Panc1 (cell line): ENCODE measurements at regions of chr7 and their contacts with region 1.

Region 1: GRCh38 chr7:135274495-135275268 is 41.0 kb downstream of the STRA8 start:
- DNase-seq: peak; percentile 69
- ATAC-seq: peak; percentile 91
- H3K4me3 ChIP-seq: no peak overlapping the region
- H3K27ac ChIP-seq: no peak overlapping the region
- H3K4me1 ChIP-seq: no peaks in the 10 kb centered on the region
- H3K27me3 ChIP-seq: no peaks in the 10 kb centered on the region
- CTCF ChIP-seq: peak; percentile 89

Region 2: DNA sequence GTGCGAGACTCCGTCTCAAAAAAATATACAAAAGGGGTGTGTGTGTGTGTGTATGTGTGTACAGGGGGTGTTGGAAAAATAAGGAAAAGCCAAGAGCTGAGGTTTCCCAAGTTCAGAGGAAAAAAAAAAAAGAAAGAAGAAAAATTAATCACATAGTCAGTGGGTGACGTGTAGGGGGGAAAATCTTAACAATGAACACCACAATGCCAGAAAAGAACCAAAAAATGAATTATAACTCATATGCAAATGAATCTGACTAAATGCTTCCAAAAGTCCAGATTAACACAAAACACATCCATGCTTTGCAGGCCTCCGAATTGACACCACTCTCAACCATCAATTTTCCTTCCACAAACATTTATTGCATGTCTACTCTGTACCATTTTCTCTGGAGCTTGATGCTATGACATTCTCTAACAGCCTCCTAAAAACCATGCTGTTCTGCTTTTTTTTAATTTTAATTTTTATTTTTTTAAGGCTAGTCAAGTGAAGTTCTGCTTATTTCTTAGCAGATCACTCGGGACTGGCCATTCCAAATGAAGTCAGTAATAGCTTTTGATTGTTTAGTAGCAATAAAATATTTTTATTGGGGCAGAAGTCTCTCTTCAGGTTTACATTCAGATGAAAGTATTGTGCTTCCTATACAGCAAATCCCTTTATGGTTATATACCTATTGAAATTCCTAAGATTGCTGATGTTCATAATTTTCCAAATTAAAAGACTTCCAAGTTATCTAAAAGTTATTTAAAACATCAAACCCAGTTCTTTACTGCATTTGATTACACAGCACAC is 101.4 kb after region 1 on chr7:
- CTCF ChIA-PET with region 1: no interaction called
- POLR2A ChIA-PET with region 1: no interaction called
- in situ Hi-C with region 1: no loop called
- intact Hi-C with region 1: no loop called
- DNase-seq: no peak
- ATAC-seq: no peak
- H3K4me3 ChIP-seq: no peak overlapping the region
- H3K27ac ChIP-seq: no peak overlapping the region
- H3K4me1 ChIP-seq: no peaks in the 10 kb centered on the region
- H3K27me3 ChIP-seq: no peaks in the 10 kb centered on the region
- CTCF ChIP-seq: no peak

Region 3: DNA sequence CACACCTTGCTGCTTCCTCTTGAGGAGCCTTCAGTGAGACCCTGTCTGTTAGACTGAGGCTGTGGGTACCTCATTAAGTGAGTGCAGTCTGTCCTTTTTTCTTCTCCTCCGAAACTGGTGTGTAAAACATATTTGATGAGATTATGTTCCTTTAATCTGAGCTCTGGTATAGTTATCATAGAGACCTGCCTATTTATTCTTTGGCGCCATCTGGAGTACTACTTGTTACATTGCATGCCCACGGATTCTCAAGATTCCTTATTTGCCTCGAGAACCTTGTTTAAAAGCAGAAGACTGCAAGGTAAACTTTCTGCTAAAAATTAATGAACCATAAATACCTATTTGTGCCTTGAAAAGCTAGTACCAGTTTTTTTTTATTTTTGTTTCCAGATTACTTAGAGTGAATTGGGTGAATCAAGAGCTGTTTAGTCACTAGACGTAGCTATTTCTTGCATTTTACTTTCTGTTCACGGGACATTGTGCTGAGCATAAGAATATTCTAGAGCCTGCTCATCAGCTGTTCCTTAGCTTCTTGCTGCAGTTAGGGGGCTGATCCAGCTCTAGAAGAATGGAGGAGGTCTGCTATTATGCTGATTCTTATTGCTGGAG is 370.7 kb after region 1 on chr7:
- CTCF ChIA-PET with region 1: interaction called, 10 read pairs
- POLR2A ChIA-PET with region 1: no interaction called
- in situ Hi-C with region 1: no loop called
- intact Hi-C with region 1: no loop called
- DNase-seq: no peak
- ATAC-seq: peak; percentile 86
- H3K4me3 ChIP-seq: no peak overlapping the region
- H3K27ac ChIP-seq: no peak overlapping the region
- H3K4me1 ChIP-seq: no peaks in the 10 kb centered on the region
- H3K27me3 ChIP-seq: no peaks in the 10 kb centered on the region
- CTCF ChIP-seq: peak; percentile 79

Region 4: GRCh38 chr7:135712159-135712782 is 437.6 kb after region 1 on chr7:
- CTCF ChIA-PET with region 1: interaction called, 10 read pairs
- POLR2A ChIA-PET with region 1: no interaction called
- in situ Hi-C with region 1: no loop called
- intact Hi-C with region 1: no loop called
- DNase-seq: no peak
- ATAC-seq: no peak
- H3K4me3 ChIP-seq: no peak overlapping the region
- H3K27ac ChIP-seq: no peak overlapping the region
- H3K4me1 ChIP-seq: peaks cover 20% of the 10 kb centered on the region; the same call in 1 of the 2 replicates
- H3K27me3 ChIP-seq: no peaks in the 10 kb centered on the region
- CTCF ChIP-seq: peak; percentile 10; the same call in 1 of the 2 replicates